RWPE1 (cell line): ENCODE measurements at regions of chr21 and their contacts with region 1.

Region 1: DNA sequence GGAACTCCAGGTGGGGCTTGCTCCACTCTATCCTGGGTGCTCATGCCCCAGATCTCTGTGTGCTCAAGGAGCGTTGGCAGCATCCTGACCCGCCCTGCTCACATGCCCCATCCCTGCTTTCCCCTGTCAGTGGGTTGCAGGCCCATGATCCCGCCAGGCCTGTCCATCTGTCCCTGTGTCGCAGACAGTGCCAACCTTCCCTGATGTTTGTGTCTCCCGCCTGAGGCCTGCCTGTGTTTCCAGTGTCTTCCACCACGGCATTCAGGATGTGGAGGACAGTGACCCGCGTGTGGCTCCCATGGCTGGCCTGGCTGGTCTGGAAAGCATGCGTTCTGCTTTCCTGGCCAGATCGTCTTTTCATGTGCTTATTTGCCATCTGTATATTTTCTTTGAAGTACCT is 82.9 kb downstream of the PCBP3 start:
- DNase-seq: no peak
- H3K27ac ChIP-seq: no peak overlapping the region
- CTCF ChIP-seq: no peak

Region 2: GRCh38 chr21:45713613-45714012 is 12.8 kb before region 1 on chr21:
- CTCF ChIA-PET with region 1: no interaction called
- POLR2A ChIA-PET with region 1: no interaction called
- DNase-seq: no peak
- H3K27ac ChIP-seq: no peak overlapping the region
- CTCF ChIP-seq: no peak

Region 3: GRCh38 chr21:45763074-45763473 is 36.6 kb after region 1 on chr21:
- CTCF ChIA-PET with region 1: interaction called, 12 read pairs
- POLR2A ChIA-PET with region 1: no interaction called
- DNase-seq: no peak
- H3K27ac ChIP-seq: no peak overlapping the region
- CTCF ChIP-seq: no peak

Region 4: DNA sequence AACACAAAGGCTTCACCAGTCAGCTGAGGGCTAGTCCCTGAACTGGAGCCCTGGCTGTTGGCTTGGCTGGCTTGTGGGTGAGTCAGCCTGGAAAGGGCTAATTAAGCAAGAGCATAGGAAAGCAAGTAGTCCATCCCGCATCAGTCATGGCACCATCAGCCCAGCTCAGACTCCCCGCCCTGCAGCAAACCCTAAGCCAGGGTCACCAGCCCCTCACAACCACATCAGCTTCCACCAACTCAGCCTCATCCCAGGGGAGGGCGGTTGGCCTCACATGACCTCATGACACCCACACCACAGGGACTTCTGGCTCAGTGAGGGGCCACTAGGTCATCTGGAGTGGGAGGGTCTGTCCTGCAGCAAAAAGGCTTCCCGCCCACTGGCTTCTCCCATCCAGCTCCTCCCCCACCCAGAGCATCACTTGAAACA is 464.8 kb after region 1 on chr21:
- CTCF ChIA-PET with region 1: no interaction called
- POLR2A ChIA-PET with region 1: no interaction called
- DNase-seq: peak; percentile 64
- H3K27ac ChIP-seq: peak overlapping the region; percentile 66
- CTCF ChIP-seq: no peak